Esophagus muscularis mucosa (tissue), 4 donors: ENCODE measurements at regions of chr7 and their contacts with region 1.

Region 1: DNA sequence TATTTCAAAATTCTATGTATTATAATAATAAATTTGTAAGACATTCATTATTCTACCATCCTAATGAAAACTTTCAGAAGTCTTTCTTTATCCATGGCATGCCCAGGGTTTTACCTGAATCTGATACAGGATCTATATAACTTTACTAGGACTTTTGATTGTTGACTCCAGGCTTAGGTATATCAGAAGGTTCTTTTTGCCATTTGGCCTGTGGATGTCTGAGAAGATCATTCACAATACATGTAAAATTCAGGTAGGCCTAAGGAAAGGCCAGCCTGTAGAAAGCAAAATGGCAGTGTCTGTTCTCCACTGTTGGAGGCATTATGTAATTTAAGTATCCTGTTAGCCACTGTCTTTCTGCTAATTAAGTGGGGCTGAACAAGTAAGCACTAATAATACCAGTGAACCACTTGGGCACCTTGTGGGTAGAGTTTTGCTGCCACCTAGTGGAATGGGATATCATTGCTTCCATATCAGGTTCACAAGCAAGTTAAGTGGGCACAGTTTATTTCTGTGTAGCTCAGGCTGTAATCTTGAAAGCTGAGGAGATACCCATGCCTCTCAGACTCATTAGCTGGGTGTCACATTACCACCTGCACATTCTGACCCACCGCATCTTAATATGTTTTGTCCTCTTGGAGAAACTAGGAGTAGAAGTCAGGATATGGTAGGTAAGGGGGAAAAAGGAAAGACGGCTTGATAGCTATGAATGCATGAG is 105.5 kb downstream of the SEPTIN7 start:
- DNase-seq: no peak
- H3K4me3 ChIP-seq: no peak overlapping the region
- H3K27ac ChIP-seq: no peak overlapping the region
- H3K4me1 ChIP-seq: peaks cover 0 to 16% (median 5%) of the 10 kb centered on the region in 4 donors
- H3K27me3 ChIP-seq: no peaks in the 10 kb centered on the region
- CTCF ChIP-seq: peak; percentile 90 to 95 (median 94)
- EP300 ChIP-seq: no peak
- POLR2A ChIP-seq: no peak

Region 2: GRCh38 chr7:35681231-35682029 is 224.9 kb before region 1 on chr7:
- intact Hi-C with region 1: no loop called
- DNase-seq: no peak
- H3K4me3 ChIP-seq: no peak overlapping the region
- H3K27ac ChIP-seq: no peak overlapping the region
- H3K4me1 ChIP-seq: peaks cover 16 to 36% (median 27%) of the 10 kb centered on the region in 4 donors
- H3K27me3 ChIP-seq: no peaks in the 10 kb centered on the region
- CTCF ChIP-seq: no peak
- EP300 ChIP-seq: no peak
- POLR2A ChIP-seq: no peak

Region 3: GRCh38 chr7:35707422-35707821 is 198.9 kb before region 1 on chr7:
- intact Hi-C with region 1: loop called (anchors 1 kb)
- DNase-seq: no peak
- H3K4me3 ChIP-seq: no peak overlapping the region
- H3K27ac ChIP-seq: no peak overlapping the region
- H3K4me1 ChIP-seq: peaks cover 4 to 8% (median 6%) of the 10 kb centered on the region in 4 donors
- H3K27me3 ChIP-seq: no peaks in the 10 kb centered on the region
- CTCF ChIP-seq: no peak
- EP300 ChIP-seq: no peak
- POLR2A ChIP-seq: no peak

Region 4: DNA sequence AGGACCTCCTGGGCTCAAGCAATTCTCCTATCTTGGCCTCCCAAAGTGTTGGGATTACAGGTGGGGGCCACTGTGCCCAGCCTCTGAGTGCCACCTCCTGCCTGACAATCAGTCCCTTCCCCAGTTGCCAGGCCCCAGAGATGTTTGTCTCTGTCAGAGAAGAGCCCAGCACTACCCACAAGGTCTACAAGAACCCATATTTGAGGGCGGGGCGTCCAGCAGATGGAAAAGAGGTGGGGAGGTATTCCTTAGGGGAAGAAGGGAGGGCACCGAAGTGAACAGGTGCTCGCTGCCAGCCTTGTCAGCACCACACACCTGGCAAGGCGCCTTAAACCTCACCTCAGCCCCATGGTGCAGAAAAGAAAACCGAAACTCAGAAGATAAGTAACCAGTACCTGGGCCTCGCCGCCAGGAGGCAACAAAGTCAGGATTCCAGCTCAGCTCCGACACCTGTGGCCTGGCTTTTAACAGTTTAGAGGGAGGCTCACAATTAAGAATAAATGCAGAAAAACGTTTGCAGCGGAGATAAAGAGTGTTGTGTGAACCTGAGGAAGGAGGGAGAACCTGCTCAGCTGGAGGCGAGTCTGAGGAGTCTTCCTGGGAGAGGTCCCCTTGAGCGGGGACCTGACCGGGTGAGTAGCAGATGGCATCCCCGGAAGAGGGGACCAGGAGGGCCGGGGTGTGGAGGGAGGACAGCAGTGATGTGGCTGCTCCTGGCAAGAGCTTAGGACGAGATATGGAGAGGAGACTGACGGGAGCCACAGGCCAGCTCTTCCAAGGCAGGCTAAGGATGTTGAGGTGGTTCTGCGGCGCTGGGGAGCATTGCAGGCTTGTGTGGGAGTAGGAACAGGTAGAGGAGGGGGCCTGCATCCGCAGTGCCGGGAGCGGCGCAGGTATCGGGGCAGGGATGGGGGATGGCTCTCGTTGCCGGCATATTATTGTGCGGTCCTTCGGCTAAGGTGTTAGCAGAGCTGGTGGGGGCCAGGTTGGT is 406.3 kb after region 1 on chr7:
- intact Hi-C with region 1: loop called (anchors 10 kb)
- DNase-seq: peak; percentile 86
- H3K4me3 ChIP-seq: no peak overlapping the region
- H3K27ac ChIP-seq: no peak overlapping the region
- H3K4me1 ChIP-seq: peaks cover 0 to 6% (median under 1%) of the 10 kb centered on the region in 4 donors
- H3K27me3 ChIP-seq: no peaks in the 10 kb centered on the region
- CTCF ChIP-seq: no peak
- EP300 ChIP-seq: no peak
- POLR2A ChIP-seq: no peak

Region 5: GRCh38 chr7:36615852-36616540 is 709.6 kb after region 1 on chr7:
- intact Hi-C with region 1: no loop called
- DNase-seq: no peak
- H3K4me3 ChIP-seq: no peak overlapping the region
- H3K27ac ChIP-seq: no peak overlapping the region
- H3K4me1 ChIP-seq: no peaks in the 10 kb centered on the region
- H3K27me3 ChIP-seq: no peaks in the 10 kb centered on the region
- CTCF ChIP-seq: no peak
- EP300 ChIP-seq: no peak
- POLR2A ChIP-seq: no peak